Mammary epithelial cell (primary cell): ENCODE measurements at regions of chr5 and their contacts with region 1.

Region 1: GRCh38 chr5:95961617-95962474 is at the start of gene ELL2:
- DNase-seq: peak; percentile 100
- H3K4me3 ChIP-seq: peak within 1 kb of the TSS; percentile 49 to 99 (median 77)
- H3K27ac ChIP-seq: peak within 1 kb of the TSS; percentile 98
- H3K4me1 ChIP-seq: peaks cover 32% of the 10 kb centered on the region
- H3K27me3 ChIP-seq: no peaks in the 10 kb centered on the region
- CTCF ChIP-seq: no peak
- total RNA-seq, gene ELL2: 161 to 277 TPM

Region 2: GRCh38 chr5:95900383-95900958 is 61.4 kb before region 1 on chr5:
- CTCF ChIA-PET with region 1: no interaction called
- dilution Hi-C with region 1: no loop called
- in situ Hi-C with region 1: no loop called
- intact Hi-C with region 1: loop called (anchors 2 kb)
- DNase-seq: no peak
- H3K4me3 ChIP-seq: no peak overlapping the region
- H3K27ac ChIP-seq: no peak overlapping the region
- H3K4me1 ChIP-seq: peaks cover 16% of the 10 kb centered on the region
- H3K27me3 ChIP-seq: no peaks in the 10 kb centered on the region
- CTCF ChIP-seq: no peak

Region 3: GRCh38 chr5:96031811-96032261 is 70.0 kb after region 1 on chr5:
- CTCF ChIA-PET with region 1: no interaction called
- dilution Hi-C with region 1: loop called (anchors 5 kb)
- in situ Hi-C with region 1: no loop called
- intact Hi-C with region 1: loop called (anchors 2 kb)
- DNase-seq: peak; percentile 93
- H3K4me3 ChIP-seq: no peak overlapping the region
- H3K27ac ChIP-seq: peak overlapping the region; percentile 84
- H3K4me1 ChIP-seq: peaks cover 43% of the 10 kb centered on the region
- H3K27me3 ChIP-seq: no peaks in the 10 kb centered on the region
- CTCF ChIP-seq: no peak

Region 4: GRCh38 chr5:96113170-96113939 is 151.5 kb after region 1 on chr5:
- CTCF ChIA-PET with region 1: no interaction called
- dilution Hi-C with region 1: no loop called
- in situ Hi-C with region 1: no loop called
- intact Hi-C with region 1: loop called (anchors 1 kb)
- DNase-seq: peak; percentile 89
- H3K4me3 ChIP-seq: peak overlapping the region in 2 of 3 experiments; percentile 8
- H3K27ac ChIP-seq: peak overlapping the region; percentile 88
- H3K4me1 ChIP-seq: peaks cover 47% of the 10 kb centered on the region
- H3K27me3 ChIP-seq: no peaks in the 10 kb centered on the region
- CTCF ChIP-seq: no peak

Region 5: DNA sequence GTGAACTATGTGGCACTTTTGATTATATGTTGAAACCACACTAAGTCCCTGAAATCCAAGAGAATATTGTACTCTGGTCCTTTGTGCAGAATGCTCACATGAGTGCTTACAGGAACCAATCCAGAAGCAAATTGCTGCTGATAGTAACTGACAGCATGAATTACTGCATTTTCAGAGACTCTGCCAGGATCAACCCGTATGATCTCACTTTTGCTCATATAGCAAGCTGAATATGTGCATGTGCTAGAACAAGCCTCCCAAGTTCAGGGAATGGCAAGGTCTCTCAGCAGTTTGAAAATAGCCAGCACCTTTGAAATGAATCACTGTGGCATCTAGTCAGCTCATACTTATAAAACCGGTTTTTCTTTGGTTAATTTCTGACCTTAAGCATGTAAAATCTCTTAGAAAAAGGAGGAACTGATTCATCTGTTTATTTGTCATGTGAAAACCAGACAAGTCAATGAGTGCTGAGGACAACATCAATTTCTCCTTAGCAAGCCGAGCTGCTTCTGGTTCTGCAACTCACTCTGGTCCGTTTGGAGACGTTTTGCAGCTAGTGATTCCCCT is 215.5 kb after region 1 on chr5:
- CTCF ChIA-PET with region 1: no interaction called
- dilution Hi-C with region 1: no loop called
- in situ Hi-C with region 1: no loop called
- intact Hi-C with region 1: loop called (anchors 1 kb)
- DNase-seq: peak; percentile 99
- H3K4me3 ChIP-seq: no peak overlapping the region
- H3K27ac ChIP-seq: peak overlapping the region; percentile 50
- H3K4me1 ChIP-seq: peaks cover 40% of the 10 kb centered on the region
- H3K27me3 ChIP-seq: no peaks in the 10 kb centered on the region
- CTCF ChIP-seq: no peak

Region 6: GRCh38 chr5:96256778-96257470 is 295.1 kb after region 1 on chr5:
- CTCF ChIA-PET with region 1: no interaction called
- dilution Hi-C with region 1: loop called (anchors 10 kb)
- in situ Hi-C with region 1: no loop called
- intact Hi-C with region 1: no loop called
- DNase-seq: peak; percentile 20
- H3K4me3 ChIP-seq: no peak overlapping the region
- H3K27ac ChIP-seq: no peak overlapping the region
- H3K4me1 ChIP-seq: peaks cover 67% of the 10 kb centered on the region
- H3K27me3 ChIP-seq: no peaks in the 10 kb centered on the region
- CTCF ChIP-seq: no peak

Region 7: DNA sequence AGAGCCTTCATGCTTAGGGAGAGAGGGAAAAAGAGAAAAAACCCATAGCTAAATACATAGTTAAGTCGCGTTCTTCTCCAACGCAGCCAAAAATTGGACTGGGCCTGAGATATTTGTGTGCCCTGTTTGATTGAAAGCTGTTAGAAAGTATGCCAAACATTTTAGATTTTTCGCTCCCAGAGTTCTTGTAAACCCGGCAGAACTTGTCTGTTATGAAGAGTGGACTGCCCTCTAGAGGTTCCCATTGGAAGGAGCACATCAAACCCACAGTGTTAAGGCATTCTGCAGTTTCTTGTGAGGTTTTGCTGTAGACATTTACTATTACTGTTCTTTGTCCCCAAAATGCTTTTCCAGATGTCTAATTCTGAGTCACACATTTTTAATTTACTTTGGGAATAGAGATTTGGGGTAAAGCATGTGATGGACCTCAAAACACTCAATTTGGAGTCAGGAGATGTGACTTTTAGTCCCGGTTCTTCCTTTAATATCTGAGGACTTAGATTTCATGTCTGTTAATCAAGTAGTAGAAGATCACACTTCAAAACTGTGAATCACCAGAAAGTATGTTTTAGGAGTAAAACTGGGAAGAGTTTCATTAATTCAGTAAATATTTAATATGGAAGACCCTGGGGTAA is 374.6 kb after region 1 on chr5:
- CTCF ChIA-PET with region 1: no interaction called
- dilution Hi-C with region 1: loop called (anchors 10 kb)
- in situ Hi-C with region 1: loop called (anchors 5 to 10 kb)
- intact Hi-C with region 1: loop called (anchors 1 kb)
- DNase-seq: peak; percentile 75
- H3K4me3 ChIP-seq: no peak overlapping the region
- H3K27ac ChIP-seq: peak overlapping the region; percentile 74
- H3K4me1 ChIP-seq: peaks cover 35% of the 10 kb centered on the region
- H3K27me3 ChIP-seq: no peaks in the 10 kb centered on the region
- CTCF ChIP-seq: peak; percentile 92 to 94